ENCODE measurements at regions of chr6 and their contacts with region 1.

Region 1: DNA sequence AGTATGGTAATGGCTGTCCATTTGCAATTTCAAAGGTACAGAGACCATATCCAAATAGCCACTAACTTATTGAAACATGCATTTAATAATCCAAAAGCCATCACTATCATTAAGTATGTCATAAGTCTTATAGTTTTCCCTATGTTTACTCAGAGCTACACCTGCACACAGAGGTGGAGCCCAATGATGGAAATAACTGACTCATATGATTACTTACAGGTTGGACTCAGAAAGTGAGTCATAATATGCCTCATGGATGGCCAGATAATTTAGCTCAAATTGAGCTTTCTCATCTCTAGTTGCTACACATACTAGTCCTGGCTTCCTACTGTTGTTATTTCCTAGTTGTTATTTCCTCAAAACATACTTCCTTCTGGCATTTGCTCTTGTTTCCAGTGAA is 104.4 kb upstream of the KHDRBS2 start:
- DNase-seq: no peak
- H3K4me3 ChIP-seq: peak overlapping the region; percentile 1
- H3K27ac ChIP-seq: peak overlapping the region; percentile 82
- H3K4me1 ChIP-seq: peaks cover 42% of the 10 kb centered on the region
- CTCF ChIP-seq: no peak

Region 2: GRCh38 chr6:61886608-61887259 is 503.7 kb before region 1 on chr6:
- CTCF ChIA-PET with region 1: no interaction called
- POLR2A ChIA-PET with region 1: no interaction called
- intact Hi-C with region 1: no loop called
- DNase-seq: peak; percentile 6
- H3K4me3 ChIP-seq: no peak overlapping the region
- H3K27ac ChIP-seq: no peak overlapping the region
- H3K4me1 ChIP-seq: no peaks in the 10 kb centered on the region
- CTCF ChIP-seq: peak; percentile 69

Region 3: GRCh38 chr6:62298745-62299392 is 91.5 kb before region 1 on chr6:
- CTCF ChIA-PET with region 1: interaction called, 3 read pairs
- POLR2A ChIA-PET with region 1: interaction called, 17 read pairs
- intact Hi-C with region 1: loop called (anchors 1 kb)
- DNase-seq: peak; percentile 74
- H3K4me3 ChIP-seq: peak overlapping the region; percentile 36
- H3K27ac ChIP-seq: peak overlapping the region; percentile 70
- H3K4me1 ChIP-seq: peaks cover 34% of the 10 kb centered on the region
- CTCF ChIP-seq: no peak

Region 4: DNA sequence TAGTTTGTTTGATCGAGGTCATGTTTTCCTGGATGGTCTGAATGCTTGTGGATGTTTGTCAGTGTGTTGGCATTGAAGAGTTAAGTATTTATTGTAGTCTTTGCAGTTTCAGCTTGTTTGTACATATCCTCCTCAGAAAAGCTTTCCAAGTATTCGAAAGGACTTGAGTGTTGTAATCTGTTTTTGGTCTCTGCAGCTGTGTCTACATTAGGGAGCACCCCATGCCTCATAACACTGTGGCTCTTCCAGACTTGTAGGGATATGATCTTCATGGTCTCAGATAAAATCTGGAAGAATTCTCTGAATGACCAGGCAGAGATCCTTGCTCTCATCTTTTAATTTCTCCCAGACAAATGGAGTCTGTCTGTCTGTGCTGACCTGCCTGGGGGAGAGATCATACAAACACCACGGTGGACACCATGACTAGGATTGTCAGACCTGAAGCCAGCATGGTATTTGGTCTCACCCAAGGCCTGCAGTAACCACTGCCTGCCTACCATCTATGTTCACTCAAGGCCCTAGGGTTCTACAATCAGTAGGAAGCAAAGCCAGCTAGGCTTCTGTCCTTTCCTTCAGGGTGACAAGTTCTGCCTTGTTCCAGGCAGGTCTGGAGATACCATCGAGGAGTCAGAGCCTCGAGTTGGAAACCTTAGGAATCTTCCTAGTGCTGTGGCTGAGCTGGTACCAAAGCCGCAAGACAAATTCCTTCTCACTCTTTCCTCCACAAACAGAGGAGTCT is 10.3 kb after region 1 on chr6:
- CTCF ChIA-PET with region 1: no interaction called
- POLR2A ChIA-PET with region 1: interaction called, 36 read pairs
- intact Hi-C with region 1: no loop called
- DNase-seq: no peak
- H3K4me3 ChIP-seq: no peak overlapping the region
- H3K27ac ChIP-seq: no peak overlapping the region
- H3K4me1 ChIP-seq: no peaks in the 10 kb centered on the region
- CTCF ChIP-seq: no peak

Region 5: DNA sequence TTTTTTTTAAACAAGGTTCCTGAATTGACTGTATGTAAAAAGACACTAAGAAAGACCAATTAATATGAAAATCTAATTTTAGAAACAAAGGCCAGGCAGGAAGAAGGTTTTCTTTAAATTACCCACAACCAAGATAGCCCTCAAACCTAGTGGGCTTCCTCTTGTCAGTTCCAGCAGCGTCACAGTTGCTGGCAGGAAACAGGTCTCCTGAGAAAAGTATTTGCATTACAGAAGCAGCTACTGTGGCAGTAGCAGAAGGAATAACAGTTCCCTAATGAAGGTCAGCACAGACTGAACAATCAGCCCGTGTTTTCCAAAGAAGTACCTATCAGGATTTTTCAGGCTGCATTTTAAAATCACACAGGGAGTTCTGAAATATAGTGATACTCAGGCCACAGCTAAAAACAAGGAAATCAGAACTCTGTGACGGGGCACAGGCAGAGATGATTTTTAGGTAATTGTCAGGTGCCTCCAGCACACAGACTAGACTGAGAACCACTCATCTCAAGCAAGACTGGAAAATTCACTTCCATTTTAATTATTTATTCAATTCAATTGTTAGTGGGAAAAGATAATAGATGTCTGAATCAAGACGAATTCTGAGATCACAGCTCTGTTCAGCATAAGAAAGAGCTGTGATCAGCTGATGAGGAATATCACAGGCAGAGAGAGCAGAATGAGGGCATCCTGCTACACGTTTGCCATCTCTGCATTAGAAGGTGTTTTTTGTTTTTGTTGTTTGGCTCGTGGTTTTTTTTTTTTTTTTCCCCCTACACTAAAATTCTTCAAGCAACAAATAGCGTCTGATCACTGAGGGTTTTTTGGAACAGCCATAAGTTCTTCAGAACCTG is 126.1 kb after region 1 on chr6:
- CTCF ChIA-PET with region 1: no interaction called
- POLR2A ChIA-PET with region 1: interaction called, 4 read pairs
- intact Hi-C with region 1: loop called (anchors 5 kb)
- DNase-seq: peak; percentile 75
- H3K4me3 ChIP-seq: peak overlapping the region; percentile 53
- H3K27ac ChIP-seq: peak overlapping the region; percentile 19
- H3K4me1 ChIP-seq: peaks cover 18% of the 10 kb centered on the region
- CTCF ChIP-seq: no peak

Region 6: DNA sequence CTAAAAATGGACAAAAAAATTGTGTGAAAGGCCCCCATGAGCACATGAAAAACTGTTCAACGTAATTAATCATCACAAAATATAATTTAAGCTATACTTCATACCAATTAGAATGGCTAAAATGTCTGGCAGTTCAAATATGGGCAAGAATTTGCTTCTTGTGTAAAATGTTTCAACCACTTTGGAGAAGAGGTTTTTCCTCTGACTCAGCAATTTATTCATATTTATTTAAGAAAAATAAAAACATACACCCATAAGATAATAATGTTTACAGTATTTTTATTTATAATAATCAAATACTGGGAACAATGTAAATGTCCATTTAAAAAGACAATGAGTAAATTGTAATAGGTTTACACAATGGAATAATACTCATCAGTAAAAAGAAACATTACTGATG is 290.7 kb after region 1 on chr6:
- CTCF ChIA-PET with region 1: no interaction called
- POLR2A ChIA-PET with region 1: no interaction called
- intact Hi-C with region 1: no loop called
- DNase-seq: no peak
- H3K4me3 ChIP-seq: no peak overlapping the region
- H3K27ac ChIP-seq: no peak overlapping the region
- H3K4me1 ChIP-seq: no peaks in the 10 kb centered on the region
- CTCF ChIP-seq: no peak